Calu3 (cell line): ENCODE measurements at regions of chr10 and their contacts with region 1.

Region 1: DNA sequence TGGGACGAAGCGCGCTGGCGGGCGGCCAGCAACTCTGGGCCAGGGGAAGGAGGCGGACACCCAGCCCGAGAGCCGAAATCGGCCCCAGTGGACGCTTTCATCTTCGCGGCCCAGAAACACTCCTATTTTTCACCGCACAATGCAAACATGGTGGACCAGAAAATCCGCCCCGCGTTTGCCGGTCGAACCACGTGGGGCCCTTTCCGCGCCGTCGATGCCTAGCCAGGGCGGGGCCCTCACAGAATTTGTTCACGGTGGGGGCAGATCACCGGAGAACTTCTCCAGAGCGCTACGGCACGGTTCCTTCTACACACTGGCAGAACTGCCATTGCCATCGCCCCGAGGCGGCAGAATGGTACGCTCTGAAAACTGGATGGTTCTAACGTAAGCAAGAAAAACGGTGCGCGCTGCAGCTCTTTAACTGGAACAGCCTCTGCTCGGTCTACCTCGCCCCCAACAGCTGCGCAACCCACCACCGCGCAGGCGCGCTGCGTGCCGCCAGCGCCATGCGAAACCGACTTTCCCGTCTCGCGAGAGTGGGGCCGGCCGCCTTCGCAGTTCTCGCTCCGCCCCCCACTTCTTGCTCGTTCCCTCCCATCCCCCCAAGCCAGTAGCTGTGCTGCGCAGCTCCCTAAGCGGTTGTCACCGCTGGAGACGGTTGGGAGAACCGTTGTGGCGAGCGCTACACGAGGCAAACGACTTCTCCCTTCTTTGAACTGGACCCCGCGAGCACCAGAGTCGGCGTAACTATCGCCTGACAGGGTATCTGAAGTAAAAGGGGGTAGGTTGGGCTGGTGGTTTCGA is at the start of gene HNRNPH3:
- DNase-seq: peak; percentile 99
- H3K4me3 Mint-ChIP-seq: peak within 1 kb of the TSS; percentile 98
- H3K27ac Mint-ChIP-seq: peak within 1 kb of the TSS; percentile 88
- H3K4me1 Mint-ChIP-seq: peaks cover 56% of the 10 kb centered on the region
- H3K27me3 Mint-ChIP-seq: no peaks in the 10 kb centered on the region
- CTCF ChIP-seq: no peak
- total RNA-seq, gene HNRNPH3: 170 and 184 TPM in 2 replicates

Region 2: DNA sequence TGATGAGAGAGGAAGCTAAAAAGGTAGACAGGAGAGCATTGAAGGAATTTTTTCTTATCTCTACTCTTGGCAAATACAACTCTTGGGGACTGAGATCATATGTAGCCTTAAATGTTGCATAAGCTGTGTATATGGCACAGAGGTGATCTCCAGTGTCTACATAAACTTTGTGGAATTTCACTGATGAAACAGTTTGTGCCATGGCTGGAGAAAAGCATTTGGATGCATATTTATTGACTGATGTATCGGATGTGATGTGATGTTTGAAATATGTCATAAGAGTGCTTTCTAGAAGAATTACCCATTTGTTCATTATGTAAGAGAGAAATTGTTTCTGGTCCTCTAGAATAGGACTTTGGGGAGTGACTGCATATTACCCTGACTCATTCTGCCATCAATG is 1650.8 kb before region 1 on chr10:
- CTCF ChIA-PET with region 1: no interaction called
- intact Hi-C with region 1: no loop called
- DNase-seq: no peak
- H3K4me3 Mint-ChIP-seq: no peak overlapping the region
- H3K27ac Mint-ChIP-seq: no peak overlapping the region
- H3K4me1 Mint-ChIP-seq: no peaks in the 10 kb centered on the region
- H3K27me3 Mint-ChIP-seq: no peaks in the 10 kb centered on the region
- CTCF ChIP-seq: no peak

Region 3: DNA sequence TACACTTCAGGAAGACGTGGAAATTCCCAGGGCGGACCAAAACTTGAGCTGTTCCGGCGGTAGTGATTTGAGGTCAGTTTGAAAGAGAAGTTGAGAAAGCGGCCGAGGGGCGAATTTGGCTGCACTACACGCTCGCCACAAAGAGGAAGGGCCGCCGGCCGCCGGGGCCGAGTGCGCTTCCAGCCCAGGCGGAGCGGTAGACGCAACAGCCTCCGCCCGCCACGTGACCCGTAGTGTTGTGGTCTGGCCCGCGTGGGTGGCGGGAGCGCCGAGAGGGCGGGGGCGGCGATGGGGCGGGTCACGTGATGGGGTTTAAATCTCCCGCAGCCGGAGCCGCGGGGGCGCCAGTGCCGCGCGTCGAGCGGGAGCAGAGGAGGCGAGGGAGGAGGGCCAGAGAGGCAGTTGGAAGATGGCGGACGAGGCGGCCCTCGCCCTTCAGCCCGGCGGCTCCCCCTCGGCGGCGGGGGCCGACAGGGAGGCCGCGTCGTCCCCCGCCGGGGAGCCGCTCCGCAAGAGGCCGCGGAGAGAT is 447.3 kb before region 1 on chr10 and contains the start of gene SIRT1:
- CTCF ChIA-PET with region 1: no interaction called
- intact Hi-C with region 1: loop called (anchors 10 kb)
- DNase-seq: peak; percentile 98
- H3K4me3 Mint-ChIP-seq: peak within 1 kb of the TSS; percentile 93
- H3K27ac Mint-ChIP-seq: peak within 1 kb of the TSS; percentile 97
- H3K4me1 Mint-ChIP-seq: peaks cover 20% of the 10 kb centered on the region
- H3K27me3 Mint-ChIP-seq: no peaks in the 10 kb centered on the region
- CTCF ChIP-seq: no peak
- total RNA-seq, gene SIRT1: 19.7 and 26.1 TPM in 2 replicates